Gastrocnemius medialis (tissue), 4 donors: ENCODE measurements at regions of chr2 and their contacts with region 1.

Region 1: GRCh38 chr2:64595397-64596160 is 58.1 kb downstream of the SERTAD2 start:
- DNase-seq: no peak
- ATAC-seq: no peak
- H3K4me3 ChIP-seq: no peak overlapping the region
- H3K27ac ChIP-seq: no peak overlapping the region
- H3K4me1 ChIP-seq: peaks cover 0 to 8% of the 10 kb centered on the region in 2 donors
- H3K27me3 ChIP-seq: no peaks in the 10 kb centered on the region
- CTCF ChIP-seq: peak in 2 of 5 experiments; percentile 19 to 44
- POLR2A ChIP-seq: no peak

Region 2: DNA sequence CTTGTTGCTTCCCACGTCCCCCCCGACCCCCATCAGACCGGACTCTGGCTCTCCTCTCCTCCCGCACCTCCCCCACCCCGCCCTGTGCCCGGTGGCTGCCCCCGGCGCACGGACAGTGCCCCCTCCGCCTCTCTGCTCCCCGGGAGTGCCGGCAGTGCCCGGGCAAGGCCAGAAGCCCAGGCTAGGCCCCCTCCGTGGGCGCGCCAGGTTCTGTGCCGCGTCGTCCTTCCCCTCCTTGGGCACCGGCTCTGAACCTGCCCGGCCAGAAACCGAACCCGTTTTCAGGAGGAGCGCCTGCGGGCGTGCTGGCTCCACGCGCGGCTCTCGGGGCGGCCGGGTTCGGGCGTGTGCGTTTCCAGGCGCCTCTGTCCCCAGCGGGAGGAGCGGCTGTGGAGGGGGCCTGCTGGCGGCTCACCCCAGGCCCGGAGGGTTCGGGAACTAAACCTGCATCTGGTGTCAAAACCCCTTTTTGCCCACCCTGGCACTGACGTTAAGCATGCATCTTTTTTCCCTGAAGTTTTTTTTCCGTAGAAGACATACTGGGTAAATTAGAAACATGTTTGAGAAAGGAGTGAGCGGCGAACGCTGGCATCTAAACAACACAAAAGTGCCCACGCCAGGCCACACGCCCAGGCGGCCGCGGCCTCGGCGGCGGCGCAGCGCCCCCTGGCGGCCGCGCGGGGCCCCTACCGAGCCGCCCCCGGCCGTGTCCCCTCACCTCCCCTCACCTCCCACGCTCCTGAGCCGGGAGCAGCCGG is 269.7 kb after region 1 on chr2:
- in situ Hi-C with region 1: loop called (anchors 5 to 25 kb)
- intact Hi-C with region 1: no loop called
- DNase-seq: peak; percentile 39 to 58
- ATAC-seq: peak; percentile 90 to 91
- H3K4me3 ChIP-seq: peak overlapping the region; percentile 77 to 80 (median 78)
- H3K27ac ChIP-seq: peak overlapping the region; percentile 77 to 87 (median 84)
- H3K4me1 ChIP-seq: peaks cover 5 to 23% of the 10 kb centered on the region in 2 donors
- H3K27me3 ChIP-seq: no peaks in the 10 kb centered on the region
- CTCF ChIP-seq: peak; percentile 48 to 99 (median 98)
- POLR2A ChIP-seq: no peak

Region 3: GRCh38 chr2:65096948-65097347 is 501.4 kb after region 1 on chr2:
- in situ Hi-C with region 1: no loop called
- intact Hi-C with region 1: no loop called
- DNase-seq: no peak
- ATAC-seq: no peak
- H3K4me3 ChIP-seq: no peak overlapping the region
- H3K27ac ChIP-seq: no peak overlapping the region
- H3K4me1 ChIP-seq: peaks cover 0 to 5% of the 10 kb centered on the region in 2 donors
- H3K27me3 ChIP-seq: no peaks in the 10 kb centered on the region
- CTCF ChIP-seq: no peak
- POLR2A ChIP-seq: no peak